ENCODE measurements at regions of chr11 and their contacts with region 1.

Region 1: GRCh38 chr11:11584446-11584810 is 37.4 kb downstream of the GALNT18 start:
- DNase-seq: peak; percentile 87
- H3K4me3 ChIP-seq: no peak overlapping the region
- H3K27ac ChIP-seq: peak overlapping the region; percentile 33
- H3K27me3 ChIP-seq: peaks cover 2% of the 10 kb centered on the region
- CTCF ChIP-seq: no peak

Region 2: DNA sequence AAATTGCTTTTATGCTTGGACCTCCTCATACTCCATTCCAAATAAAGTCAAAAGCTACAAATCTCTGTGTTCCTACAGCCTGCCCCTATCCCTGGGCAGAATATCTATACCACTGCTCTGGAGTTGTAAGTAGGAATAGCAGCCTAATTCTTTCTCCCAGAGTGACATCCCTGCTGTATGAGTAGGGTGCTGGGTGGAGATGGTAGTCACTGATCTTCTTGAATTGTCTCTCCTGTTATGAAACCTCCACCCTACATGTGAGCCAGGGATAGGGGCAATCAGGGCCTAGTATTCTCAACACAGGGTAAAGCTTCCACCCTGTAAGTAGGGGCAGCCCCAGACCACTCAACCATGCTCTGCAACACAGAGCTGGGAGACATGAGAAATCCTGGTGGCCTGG is 17.6 kb after region 1 on chr11:
- CTCF ChIA-PET with region 1: no interaction called
- POLR2A ChIA-PET with region 1: no interaction called
- DNase-seq: no peak
- H3K4me3 ChIP-seq: no peak overlapping the region
- H3K27ac ChIP-seq: no peak overlapping the region
- H3K27me3 ChIP-seq: no peaks in the 10 kb centered on the region
- CTCF ChIP-seq: no peak

Region 3: GRCh38 chr11:11621573-11622319 is 37.3 kb after region 1 on chr11 and contains the start of gene GALNT18:
- CTCF ChIA-PET with region 1: interaction called, 3 read pairs
- POLR2A ChIA-PET with region 1: interaction called, 10 read pairs
- DNase-seq: peak; percentile 80
- H3K4me3 ChIP-seq: peak within 1 kb of the TSS; percentile 72
- H3K27ac ChIP-seq: peak within 1 kb of the TSS; percentile 52
- H3K27me3 ChIP-seq: peaks cover 2% of the 10 kb centered on the region
- CTCF ChIP-seq: peak; percentile 41
- polyA plus RNA-seq, gene GALNT18: 4.8 and 6.0 TPM in 2 replicates

Region 4: DNA sequence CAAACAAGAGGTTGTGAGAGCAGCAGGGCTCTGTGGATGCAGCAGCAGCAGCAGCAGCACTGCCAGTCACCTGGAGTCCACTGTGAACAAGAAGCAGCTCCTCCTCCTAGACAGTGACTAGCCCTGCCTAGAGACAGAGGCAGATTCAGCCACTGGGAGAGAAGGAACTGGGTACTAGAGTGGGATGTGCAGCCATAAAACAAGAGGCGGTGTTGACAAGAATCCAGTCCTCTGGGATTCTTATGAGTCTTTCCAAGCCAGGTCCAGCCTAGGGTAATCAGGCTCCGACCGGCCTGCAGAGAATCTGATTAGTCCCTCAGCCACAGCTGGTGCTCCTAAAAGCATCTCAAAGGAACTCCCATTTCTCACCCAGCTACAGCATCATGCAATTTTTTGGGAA is 173.5 kb after region 1 on chr11:
- CTCF ChIA-PET with region 1: no interaction called
- POLR2A ChIA-PET with region 1: no interaction called
- DNase-seq: no peak
- H3K4me3 ChIP-seq: no peak overlapping the region
- H3K27ac ChIP-seq: no peak overlapping the region
- H3K27me3 ChIP-seq: peaks cover 61% of the 10 kb centered on the region
- CTCF ChIP-seq: no peak

Region 5: DNA sequence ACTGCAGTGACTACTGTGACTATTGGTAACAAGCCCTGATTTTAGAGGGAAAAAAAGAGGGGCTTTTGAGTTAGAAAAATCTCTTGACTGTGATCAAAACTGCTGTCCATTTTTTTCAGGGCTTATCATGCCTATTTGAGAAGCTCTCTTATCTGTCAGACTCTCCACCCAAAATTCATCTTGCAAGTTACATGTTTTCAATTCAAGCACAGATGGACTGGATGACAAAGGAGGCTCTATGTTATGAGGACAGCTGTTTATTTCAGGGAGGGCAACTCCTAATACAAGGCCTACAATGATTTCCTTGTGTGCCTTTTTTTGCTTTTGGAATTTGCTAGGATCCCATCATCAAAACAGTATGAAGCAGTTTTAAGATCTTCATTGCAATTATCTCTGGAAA is 222.2 kb after region 1 on chr11:
- CTCF ChIA-PET with region 1: interaction called, 13 read pairs
- POLR2A ChIA-PET with region 1: no interaction called
- DNase-seq: no peak
- H3K4me3 ChIP-seq: no peak overlapping the region
- H3K27ac ChIP-seq: no peak overlapping the region
- H3K27me3 ChIP-seq: no peaks in the 10 kb centered on the region
- CTCF ChIP-seq: no peak

Region 6: GRCh38 chr11:12827929-12828812 is 1243.7 kb after region 1 on chr11:
- CTCF ChIA-PET with region 1: no interaction called
- POLR2A ChIA-PET with region 1: no interaction called
- DNase-seq: no peak
- H3K4me3 ChIP-seq: peak overlapping the region; percentile 58
- H3K27ac ChIP-seq: peak overlapping the region; percentile 76
- H3K27me3 ChIP-seq: no peaks in the 10 kb centered on the region
- CTCF ChIP-seq: no peak

Measured in AG04450 (cell line).